Esophagus squamous epithelium (tissue), 5 donors: ENCODE measurements at regions of chr20 and their contacts with region 1.

Region 1: DNA sequence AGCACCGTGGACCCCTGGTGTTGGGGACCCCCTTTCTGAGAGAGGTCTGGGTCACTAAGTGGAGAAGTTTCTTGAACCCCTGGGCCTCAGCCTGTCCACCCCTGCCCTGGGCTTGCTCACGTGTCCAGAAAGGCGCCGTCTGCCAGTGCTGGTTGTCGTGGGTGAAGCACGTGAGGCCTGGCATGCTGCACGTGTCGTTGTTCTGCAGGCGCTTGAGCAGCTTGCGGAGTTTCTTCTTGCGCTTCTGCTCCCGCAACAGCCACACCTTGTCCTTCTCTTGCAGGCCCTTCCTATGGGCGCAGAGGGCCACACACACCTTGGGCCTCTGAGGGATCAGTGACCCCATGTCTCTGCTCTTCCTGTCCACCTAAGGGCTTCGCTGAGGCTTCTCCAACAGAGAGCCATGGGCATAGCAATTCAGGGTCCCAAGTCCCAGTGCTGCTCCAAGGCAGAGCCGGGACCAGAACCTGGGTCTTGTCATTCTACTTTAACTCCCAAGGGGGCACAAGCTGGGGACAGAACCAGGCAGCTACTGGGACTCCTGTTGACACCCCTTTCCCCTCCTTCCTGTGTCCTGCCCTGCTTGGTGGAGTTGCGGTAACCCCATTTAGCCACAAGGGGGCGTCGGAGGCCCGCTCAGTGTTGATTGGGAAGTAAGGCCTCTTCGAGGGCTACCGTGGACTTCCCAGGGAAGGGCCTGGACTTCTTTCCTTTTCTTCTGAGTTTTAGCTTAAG is 121.8 kb downstream of the SULF2 start:
- DNase-seq: no peak
- H3K4me3 ChIP-seq: no peak overlapping the region
- H3K27ac ChIP-seq: peak overlapping the region in 1 of 4 donors; percentile 23
- H3K4me1 ChIP-seq: peaks cover 8 to 33% (median 11%) of the 10 kb centered on the region in 3 donors
- H3K27me3 ChIP-seq: no peaks in the 10 kb centered on the region
- CTCF ChIP-seq: peak; percentile 91 to 98 (median 95)
- POLR2A ChIP-seq: no peak

Region 2: GRCh38 chr20:47574616-47575364 is 88.7 kb before region 1 on chr20:
- intact Hi-C with region 1: no loop called
- DNase-seq: no peak
- H3K4me3 ChIP-seq: no peak overlapping the region
- H3K27ac ChIP-seq: peak overlapping the region in 3 of 4 donors; percentile 66 to 83 (median 79)
- H3K4me1 ChIP-seq: peaks cover 47 to 71% (median 58%) of the 10 kb centered on the region in 3 donors
- H3K27me3 ChIP-seq: no peaks in the 10 kb centered on the region
- CTCF ChIP-seq: no peak
- POLR2A ChIP-seq: no peak

Region 3: GRCh38 chr20:48620519-48621254 is 957.2 kb after region 1 on chr20:
- intact Hi-C with region 1: loop called (anchors 5 kb)
- DNase-seq: no peak
- H3K4me3 ChIP-seq: peak overlapping the region; percentile 13 to 35 (median 30)
- H3K27ac ChIP-seq: no peak overlapping the region
- H3K4me1 ChIP-seq: peaks cover 10 to 26% (median 15%) of the 10 kb centered on the region in 3 donors
- H3K27me3 ChIP-seq: peaks cover 0 to 19% (median 0%) of the 10 kb centered on the region in 4 donors
- CTCF ChIP-seq: peak; percentile 44 to 96 (median 94)
- POLR2A ChIP-seq: no peak